ENCODE measurements at regions of chr6 and their contacts with region 1.

Region 1: DNA sequence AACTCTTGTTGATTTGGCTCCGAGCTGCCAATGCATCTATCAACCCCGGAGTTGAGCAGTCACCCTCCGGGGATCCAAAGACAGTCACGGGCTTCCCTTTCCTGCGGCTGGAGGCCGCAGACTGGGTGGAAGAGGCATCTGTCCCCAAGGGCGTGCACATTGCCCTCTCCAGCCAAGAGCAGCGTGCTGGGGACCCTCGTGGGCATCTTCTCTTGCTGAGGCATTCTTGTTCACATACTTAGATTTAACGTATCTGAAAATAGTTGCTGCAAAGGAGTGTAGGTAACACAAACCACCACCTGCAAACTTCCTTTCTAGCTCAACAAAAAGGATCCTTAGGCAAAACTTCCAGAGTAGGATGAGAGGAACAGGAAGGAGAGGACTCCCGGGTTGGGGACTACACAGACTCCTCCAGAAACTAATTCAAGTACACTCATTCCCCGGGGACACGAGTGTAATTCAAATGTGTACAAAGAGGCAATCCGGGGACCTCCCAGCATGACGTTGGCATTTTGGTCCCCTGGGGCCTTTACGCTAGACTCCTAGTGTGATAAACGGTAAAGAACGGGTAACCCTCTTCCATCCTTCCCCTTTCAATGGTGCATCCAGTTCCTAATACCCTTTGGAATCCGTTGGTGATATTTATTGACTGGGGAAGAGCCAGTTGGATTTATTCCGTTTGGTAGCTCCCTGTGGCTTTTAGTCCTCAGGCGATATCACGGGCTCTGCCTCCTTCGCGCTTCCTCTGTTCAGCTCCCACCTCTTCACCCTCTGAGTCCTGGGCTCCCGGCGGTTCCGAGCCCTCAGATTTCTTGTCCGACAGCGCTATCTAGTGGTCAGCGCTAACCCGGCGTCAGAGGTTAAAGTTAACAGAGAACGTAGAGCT is 2.7 kb upstream of the COL12A1 start:
- DNase-seq: peak; percentile 84 to 94 (median 92)
- ATAC-seq: peak; percentile 78 to 83
- H3K4me3 ChIP-seq: peak overlapping the region; percentile 43
- H3K27ac ChIP-seq: no peak overlapping the region
- H3K4me1 ChIP-seq: peaks cover 3% of the 10 kb centered on the region
- H3K27me3 ChIP-seq: no peaks in the 10 kb centered on the region

Region 2: DNA sequence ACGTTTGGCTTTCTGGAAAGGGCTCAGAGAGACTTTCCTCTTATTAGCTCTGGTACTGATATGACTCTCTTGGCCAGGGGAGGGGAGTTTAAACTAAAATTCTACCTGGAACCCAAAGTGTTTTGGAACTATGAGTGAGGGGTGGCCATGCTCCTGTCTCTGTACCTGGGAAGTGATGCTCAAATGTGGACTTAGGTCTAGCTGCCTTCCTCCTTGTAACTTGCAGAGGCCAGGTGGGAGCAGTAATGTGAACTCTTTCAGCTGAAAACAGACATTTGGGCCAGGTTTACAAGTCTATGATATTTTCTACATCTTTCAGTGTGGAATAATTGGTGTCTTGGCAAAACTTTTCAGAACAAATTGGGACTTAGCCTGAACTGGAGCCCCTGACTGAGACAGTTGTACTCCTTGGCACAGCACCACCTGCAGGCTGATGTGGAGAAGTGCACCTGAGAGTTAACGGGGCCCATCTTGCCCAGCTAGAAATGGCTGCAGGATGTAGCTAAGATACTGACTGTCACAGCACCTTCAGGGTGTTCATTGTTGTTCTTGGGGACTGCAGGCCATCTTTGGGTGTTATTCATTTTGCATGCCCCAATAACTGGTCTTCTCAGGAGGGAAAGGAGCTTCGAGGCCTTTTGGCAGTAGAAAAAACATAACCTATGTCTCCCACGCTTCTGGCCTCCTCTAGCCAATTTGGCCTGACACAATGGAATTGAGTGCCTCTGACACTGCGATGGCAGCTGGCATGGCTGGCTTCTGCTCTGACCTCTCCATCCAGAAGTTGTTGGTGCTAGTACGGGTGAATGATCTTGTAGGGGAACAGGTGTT is 1475.5 kb before region 1 on chr6:
- intact Hi-C with region 1: loop called in 1 of 4 experiments (anchors 10 kb)
- DNase-seq: peak; percentile 42 to 78 (median 66)
- ATAC-seq: peak; percentile 74 to 88
- H3K4me3 ChIP-seq: no peak overlapping the region
- H3K27ac ChIP-seq: no peak overlapping the region
- H3K4me1 ChIP-seq: no peaks in the 10 kb centered on the region
- H3K27me3 ChIP-seq: no peaks in the 10 kb centered on the region

Region 3: DNA sequence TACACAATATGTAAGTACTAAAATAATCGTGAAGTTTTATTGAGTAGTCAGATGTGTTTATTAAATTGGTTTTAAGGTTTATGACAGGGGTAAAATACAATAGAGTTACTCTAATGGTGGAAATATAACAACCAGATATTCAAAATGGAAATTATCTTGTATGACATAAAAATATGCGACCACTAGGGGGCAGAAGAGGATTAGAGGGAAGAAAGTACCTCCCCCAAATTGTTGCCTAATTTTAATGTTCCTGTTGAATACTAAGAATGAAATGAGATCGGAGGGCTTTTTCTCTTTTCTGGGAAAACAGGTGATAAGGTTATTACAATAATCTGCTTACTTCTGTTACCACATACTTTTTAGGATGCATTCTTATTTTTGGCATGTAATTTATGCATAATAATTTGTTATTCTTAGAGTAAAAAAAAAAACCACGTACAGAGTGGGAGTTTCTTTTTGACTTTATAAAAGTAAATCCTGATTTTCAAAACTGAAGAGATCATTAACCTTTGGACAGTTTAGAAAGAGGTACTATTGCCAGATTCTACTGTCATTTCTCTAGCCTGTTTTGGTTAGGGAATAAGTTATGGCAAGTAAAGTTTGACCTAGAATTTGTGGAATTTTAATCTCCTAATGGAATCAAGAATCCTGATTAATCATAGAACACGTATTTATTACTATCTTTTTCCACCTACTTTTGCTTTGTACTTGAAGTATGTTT is 1353.4 kb before region 1 on chr6:
- intact Hi-C with region 1: loop called in 3 of 4 experiments (anchors 10 kb)
- DNase-seq: no peak
- ATAC-seq: no peak
- H3K4me3 ChIP-seq: peak overlapping the region; percentile 25
- H3K27ac ChIP-seq: no peak overlapping the region
- H3K4me1 ChIP-seq: no peaks in the 10 kb centered on the region
- H3K27me3 ChIP-seq: no peaks in the 10 kb centered on the region

Region 4: DNA sequence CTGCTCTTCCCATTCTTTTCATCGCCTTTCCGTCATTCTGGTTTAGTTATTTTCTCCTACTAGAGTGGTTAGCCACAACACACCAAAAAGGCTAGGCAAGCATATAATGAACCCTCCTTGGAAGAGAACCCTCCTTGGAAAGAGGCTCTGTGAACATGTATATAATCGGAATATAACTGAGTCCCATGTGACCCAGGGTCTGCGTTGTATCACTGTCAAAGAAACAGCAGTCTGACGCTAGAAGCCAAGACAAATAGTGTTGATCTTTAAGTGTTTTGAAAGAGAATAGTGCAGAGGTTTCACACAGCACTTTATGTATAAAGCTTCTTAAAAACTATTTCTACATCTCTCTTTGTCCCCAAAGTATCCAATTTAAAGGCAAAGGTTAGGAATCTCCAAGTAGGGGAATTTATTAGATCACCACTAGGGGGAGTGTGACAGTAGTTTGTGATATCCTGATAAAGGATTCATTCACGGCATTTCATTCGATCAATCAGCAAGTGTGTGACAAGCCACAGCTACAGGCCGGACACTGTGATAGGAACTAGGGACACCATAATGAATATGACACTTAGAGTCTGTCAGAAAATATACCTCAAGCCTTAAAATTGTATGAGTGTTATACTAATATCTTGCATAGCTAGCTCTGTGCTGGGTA is 1117.3 kb before region 1 on chr6:
- intact Hi-C with region 1: loop called in 3 of 4 experiments (anchors 5 to 10 kb)
- DNase-seq: no peak
- ATAC-seq: peak in 1 of 2 donors; percentile 41
- H3K4me3 ChIP-seq: no peak overlapping the region
- H3K27ac ChIP-seq: no peak overlapping the region
- H3K4me1 ChIP-seq: no peaks in the 10 kb centered on the region
- H3K27me3 ChIP-seq: no peaks in the 10 kb centered on the region

Region 5: DNA sequence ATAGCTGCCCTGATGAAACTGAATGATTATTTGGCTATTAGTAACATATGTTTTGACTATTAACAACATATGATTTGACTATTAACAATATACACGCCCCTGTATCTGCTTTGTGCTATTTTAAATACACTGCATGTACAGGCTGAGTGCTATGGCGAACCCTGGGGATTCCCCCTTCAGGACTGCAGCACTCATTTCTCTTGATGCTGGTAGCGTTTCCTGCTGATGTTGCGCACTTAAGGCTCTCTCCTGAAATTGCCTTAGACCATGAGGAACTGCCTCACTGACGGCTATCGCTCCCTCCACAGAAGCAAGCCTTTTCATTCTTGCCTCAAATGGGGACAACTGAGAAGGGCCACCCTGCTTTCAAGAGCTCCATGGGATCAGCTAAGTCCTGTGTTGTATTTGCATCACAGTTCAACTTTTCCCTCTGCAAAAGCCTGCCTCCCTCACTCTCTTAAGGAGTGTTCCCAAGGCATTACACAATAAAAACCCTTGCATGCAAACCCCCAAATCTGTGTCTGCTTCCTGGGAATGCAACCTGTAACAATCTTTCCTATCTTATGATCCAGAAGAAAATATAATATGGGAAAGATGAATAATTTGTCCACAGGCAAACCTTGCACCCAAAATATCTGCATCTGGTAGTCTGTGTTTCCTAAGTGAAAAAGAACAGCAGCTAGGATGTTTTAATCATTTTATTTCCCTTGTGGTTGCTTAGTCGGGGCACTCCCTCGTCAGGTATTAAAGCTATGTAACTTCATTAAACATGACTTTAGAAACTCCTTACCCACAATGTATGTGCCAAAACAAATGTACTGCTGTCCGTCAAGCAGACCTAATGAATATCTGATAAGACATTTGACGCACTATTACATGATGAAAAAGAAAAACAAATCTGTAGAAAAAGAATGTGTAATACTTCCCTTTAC is 459.1 kb before region 1 on chr6:
- intact Hi-C with region 1: loop called in 1 of 4 experiments (anchors 10 kb)
- DNase-seq: no peak
- ATAC-seq: no peak
- H3K4me3 ChIP-seq: no peak overlapping the region
- H3K27ac ChIP-seq: no peak overlapping the region
- H3K4me1 ChIP-seq: no peaks in the 10 kb centered on the region
- H3K27me3 ChIP-seq: no peaks in the 10 kb centered on the region